ENCODE measurements at regions of chr6 and their contacts with region 1.

Region 1: GRCh38 chr6:75526502-75527127 is 33.0 kb upstream of the FILIP1 start:
- DNase-seq: peak in 1 of 2 donors; percentile 79
- ATAC-seq: peak; percentile 70 to 84 (median 75)
- H3K4me3 ChIP-seq: no peak overlapping the region
- H3K4me3 Mint-ChIP-seq: no peak overlapping the region
- H3K27ac ChIP-seq: no peak overlapping the region
- H3K27ac Mint-ChIP-seq: no peak overlapping the region
- H3K4me1 ChIP-seq: no peaks in the 10 kb centered on the region
- H3K4me1 Mint-ChIP-seq: no peaks in the 10 kb centered on the region
- H3K27me3 ChIP-seq: peaks cover 3% of the 10 kb centered on the region
- H3K27me3 Mint-ChIP-seq: peaks cover 14 to 21% of the 10 kb centered on the region in 2 donors
- CTCF ChIP-seq: peak; percentile 54

Region 2: DNA sequence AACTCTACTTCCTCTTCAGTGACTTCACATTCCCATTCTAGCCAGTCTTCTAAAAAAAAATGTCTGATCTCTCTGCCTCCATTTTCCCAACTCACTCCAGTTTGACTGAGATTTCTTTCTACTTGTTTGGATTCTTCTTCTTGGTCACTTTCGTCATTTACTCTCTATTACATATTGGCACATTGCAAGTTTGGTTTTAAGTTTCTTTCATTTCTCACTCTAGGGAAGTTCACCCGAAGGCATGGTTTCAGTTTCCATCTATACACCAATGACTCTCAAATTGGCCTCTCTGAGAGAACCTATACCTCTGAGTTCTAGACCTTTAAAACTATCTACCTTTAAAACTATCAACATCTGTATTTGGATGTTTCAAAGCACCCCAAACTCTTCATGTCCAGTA is 1779.3 kb before region 1 on chr6:
- intact Hi-C with region 1: loop called (anchors 10 kb)
- DNase-seq: peak in 1 of 2 donors; percentile 18
- ATAC-seq: peak; percentile 67 to 87 (median 80)
- H3K4me3 ChIP-seq: no peak overlapping the region
- H3K4me3 Mint-ChIP-seq: no peak overlapping the region
- H3K27ac ChIP-seq: no peak overlapping the region
- H3K27ac Mint-ChIP-seq: no peak overlapping the region
- H3K4me1 ChIP-seq: no peaks in the 10 kb centered on the region
- H3K4me1 Mint-ChIP-seq: no peaks in the 10 kb centered on the region
- H3K27me3 ChIP-seq: no peaks in the 10 kb centered on the region
- H3K27me3 Mint-ChIP-seq: no peaks in the 10 kb centered on the region
- CTCF ChIP-seq: no peak

Region 3: DNA sequence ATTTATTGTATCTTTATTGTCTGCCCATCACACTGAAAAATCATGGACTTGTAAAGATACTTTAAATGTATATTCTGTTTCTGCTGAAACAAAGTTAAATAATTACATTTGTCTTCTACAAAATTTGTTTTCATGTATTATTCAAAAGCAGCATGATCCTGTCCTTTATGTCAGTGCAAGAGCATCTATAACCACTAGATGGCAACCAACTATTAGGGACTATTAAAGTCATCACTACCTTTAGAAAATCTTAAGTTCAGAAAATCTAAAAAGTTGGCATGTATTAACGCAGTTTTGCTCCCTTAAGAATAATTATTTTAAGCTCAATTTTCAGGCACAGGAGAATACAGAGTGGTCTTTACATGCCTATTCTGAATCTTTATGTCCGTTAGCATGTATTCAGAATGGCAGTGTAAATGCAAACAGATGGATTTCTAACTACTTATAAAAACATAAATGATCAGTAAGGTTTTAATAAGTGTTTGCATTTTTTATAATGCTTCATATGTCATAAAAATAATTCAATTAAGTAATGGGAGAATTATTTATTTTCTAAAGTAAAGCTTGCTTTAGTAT is 259.8 kb before region 1 on chr6:
- intact Hi-C with region 1: loop called (anchors 1 kb)
- DNase-seq: peak in 1 of 2 donors; percentile 68
- ATAC-seq: peak; percentile 61 to 77 (median 76)
- H3K4me3 ChIP-seq: no peak overlapping the region
- H3K4me3 Mint-ChIP-seq: no peak overlapping the region
- H3K27ac ChIP-seq: no peak overlapping the region
- H3K27ac Mint-ChIP-seq: no peak overlapping the region
- H3K4me1 ChIP-seq: no peaks in the 10 kb centered on the region
- H3K4me1 Mint-ChIP-seq: peaks cover 27 to 36% of the 10 kb centered on the region in 2 donors
- H3K27me3 ChIP-seq: no peaks in the 10 kb centered on the region
- H3K27me3 Mint-ChIP-seq: no peaks in the 10 kb centered on the region
- CTCF ChIP-seq: peak; percentile 88

Region 4: GRCh38 chr6:75296811-75297779 is 229.5 kb before region 1 on chr6:
- intact Hi-C with region 1: loop called (anchors 10 kb)
- DNase-seq: peak in 1 of 2 donors; percentile 80
- ATAC-seq: peak; percentile 60 to 68 (median 64)
- H3K4me3 ChIP-seq: no peak overlapping the region
- H3K4me3 Mint-ChIP-seq: no peak overlapping the region
- H3K27ac ChIP-seq: no peak overlapping the region
- H3K27ac Mint-ChIP-seq: no peak overlapping the region
- H3K4me1 ChIP-seq: no peaks in the 10 kb centered on the region
- H3K4me1 Mint-ChIP-seq: no peaks in the 10 kb centered on the region
- H3K27me3 ChIP-seq: no peaks in the 10 kb centered on the region
- H3K27me3 Mint-ChIP-seq: no peaks in the 10 kb centered on the region
- CTCF ChIP-seq: peak; percentile 83

Region 5: GRCh38 chr6:75727206-75727605 is 200.6 kb after region 1 on chr6:
- intact Hi-C with region 1: no loop called
- DNase-seq: no peak
- ATAC-seq: no peak
- H3K4me3 ChIP-seq: no peak overlapping the region
- H3K4me3 Mint-ChIP-seq: no peak overlapping the region
- H3K27ac ChIP-seq: no peak overlapping the region
- H3K27ac Mint-ChIP-seq: no peak overlapping the region
- H3K4me1 ChIP-seq: no peaks in the 10 kb centered on the region
- H3K4me1 Mint-ChIP-seq: no peaks in the 10 kb centered on the region
- H3K27me3 ChIP-seq: no peaks in the 10 kb centered on the region
- H3K27me3 Mint-ChIP-seq: no peaks in the 10 kb centered on the region
- CTCF ChIP-seq: no peak